Activated T-helper 1 cell treated with anti-CD3 and anti-CD28 coated beads, Interleukin-12 subunit alpha, Interleukin-12 subunit beta, Interleukin-2, Interleukin-4 antibody, amounts not matched to agents 30 ng/mL and 10 ng/mL and 1 ng/mL, durations not matched to agents 14 hours and 24 hours and 36 hours (primary cell): ENCODE measurements at regions of chr13 and their contacts with region 1.

Region 1: DNA sequence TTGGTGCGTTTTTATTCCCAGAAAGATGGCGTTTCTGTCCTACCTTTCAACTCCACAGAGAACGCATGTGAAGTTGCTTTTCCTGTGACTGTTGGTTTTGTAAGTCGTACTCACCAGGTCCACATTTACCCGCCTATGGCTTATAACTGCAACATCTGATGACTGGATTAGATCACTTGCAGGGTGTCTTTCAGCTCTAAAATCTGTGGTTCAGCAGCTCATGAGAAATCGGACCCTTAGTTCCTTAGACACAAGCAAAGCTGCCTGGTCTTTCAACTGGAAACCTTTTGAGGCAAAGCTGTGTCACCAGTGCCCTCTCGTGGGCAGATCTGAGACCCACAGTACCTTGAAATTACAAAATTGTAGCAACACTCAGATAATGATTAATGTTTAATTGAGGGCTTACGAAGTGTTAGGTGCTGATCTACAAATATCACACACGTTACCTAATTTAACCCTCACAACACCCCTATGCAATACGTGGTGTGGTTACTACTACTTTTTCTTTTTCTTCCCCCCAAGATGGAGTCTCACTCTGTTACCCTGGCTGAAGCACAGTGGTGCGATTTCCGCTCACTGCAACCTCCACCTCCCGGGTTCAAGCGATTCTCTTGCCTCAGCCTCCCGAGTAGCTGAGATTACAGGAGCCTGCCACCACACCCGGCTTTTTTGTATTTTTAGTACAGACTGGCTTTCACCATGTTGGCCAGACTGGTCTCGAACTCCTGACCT is 65.4 kb downstream of the RUBCNL start:
- DNase-seq: peak; percentile 52
- H3K4me3 Mint-ChIP-seq: peak overlapping the region; percentile 84
- H3K27ac Mint-ChIP-seq: peak overlapping the region; percentile 93
- H3K4me1 Mint-ChIP-seq: peaks cover 38% of the 10 kb centered on the region
- H3K27me3 Mint-ChIP-seq: peaks cover 2% of the 10 kb centered on the region

Region 2: GRCh38 chr13:45511310-45512097 is 810.2 kb before region 1 on chr13:
- intact Hi-C with region 1: loop called (anchors 1 kb)
- DNase-seq: no peak
- H3K4me3 Mint-ChIP-seq: no peak overlapping the region
- H3K27ac Mint-ChIP-seq: no peak overlapping the region
- H3K4me1 Mint-ChIP-seq: peaks cover 9% of the 10 kb centered on the region
- H3K27me3 Mint-ChIP-seq: no peaks in the 10 kb centered on the region

Region 3: DNA sequence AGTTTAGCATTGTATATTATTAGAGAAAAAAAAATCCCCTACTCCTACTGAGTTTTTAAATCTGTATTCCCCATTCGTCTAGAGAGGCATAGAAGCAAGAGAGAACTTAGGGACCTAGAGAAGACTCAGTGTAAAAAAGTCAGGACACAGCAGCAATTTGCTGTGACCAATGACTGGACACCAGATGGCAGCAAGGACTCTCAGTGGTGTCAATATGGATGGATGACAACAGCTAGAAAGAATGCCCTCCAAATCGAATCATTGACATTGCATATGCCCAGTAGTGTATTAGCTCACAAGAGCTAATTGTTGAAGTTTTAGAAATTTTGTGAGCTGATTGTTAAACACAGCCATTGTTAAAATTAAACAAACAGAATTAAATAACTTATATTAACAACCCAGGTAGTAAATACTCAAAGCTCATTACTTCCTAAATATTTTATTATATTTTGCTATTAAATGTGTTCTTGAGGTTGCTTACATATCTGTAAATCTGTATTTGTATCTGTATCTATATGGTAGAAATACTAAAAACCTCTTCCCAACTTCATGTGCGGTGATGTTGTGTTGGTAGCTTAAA is 514.0 kb before region 1 on chr13:
- intact Hi-C with region 1: loop called (anchors 1 kb)
- DNase-seq: no peak
- H3K4me3 Mint-ChIP-seq: no peak overlapping the region
- H3K27ac Mint-ChIP-seq: no peak overlapping the region
- H3K4me1 Mint-ChIP-seq: peaks cover 4% of the 10 kb centered on the region
- H3K27me3 Mint-ChIP-seq: peaks cover 2% of the 10 kb centered on the region

Region 4: GRCh38 chr13:46126552-46127357 is 194.9 kb before region 1 on chr13:
- intact Hi-C with region 1: loop called (anchors 1 kb)
- DNase-seq: peak; percentile 38
- H3K4me3 Mint-ChIP-seq: no peak overlapping the region
- H3K27ac Mint-ChIP-seq: peak overlapping the region; percentile 19
- H3K4me1 Mint-ChIP-seq: peaks cover 25% of the 10 kb centered on the region
- H3K27me3 Mint-ChIP-seq: peaks cover 2% of the 10 kb centered on the region

Region 5: GRCh38 chr13:46184277-46184699 is 137.4 kb before region 1 on chr13:
- intact Hi-C with region 1: loop called (anchors 1 kb)
- DNase-seq: peak; percentile 64
- H3K4me3 Mint-ChIP-seq: peak overlapping the region; percentile 97
- H3K27ac Mint-ChIP-seq: peak overlapping the region; percentile 99
- H3K4me1 Mint-ChIP-seq: peaks cover 39% of the 10 kb centered on the region
- H3K27me3 Mint-ChIP-seq: no peaks in the 10 kb centered on the region

Region 6: DNA sequence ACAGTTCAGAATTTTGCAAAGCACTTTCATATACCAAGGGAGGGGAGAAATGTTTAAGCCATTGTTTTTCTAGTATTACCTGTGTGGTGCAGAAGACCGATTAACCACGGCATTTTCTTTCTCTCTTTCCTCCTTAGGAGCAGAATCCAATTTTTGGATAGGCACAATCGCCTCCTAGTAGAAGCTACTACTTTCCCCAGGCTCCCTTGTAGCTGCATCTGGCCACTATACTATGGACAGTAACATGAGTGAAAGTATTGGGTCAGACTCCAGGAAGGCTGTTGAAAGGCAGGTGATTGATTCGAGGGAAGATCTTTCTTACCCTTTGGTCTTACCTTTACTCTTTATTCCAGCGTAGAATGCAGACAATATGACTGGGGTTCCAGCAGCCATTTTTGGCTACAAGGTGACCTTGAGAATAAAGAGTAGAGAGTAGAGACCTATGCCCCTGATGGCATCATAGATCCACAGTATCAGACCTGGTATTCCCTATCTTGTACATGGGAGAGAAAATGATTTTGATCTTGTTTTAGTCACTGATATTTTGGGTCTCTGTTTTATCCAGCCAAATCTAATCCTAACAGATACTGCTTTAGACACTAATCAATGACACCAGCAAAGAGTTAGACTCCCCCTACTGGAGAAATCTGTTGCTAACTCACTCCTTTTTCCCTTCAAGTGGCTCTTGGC is 32.9 kb before region 1 on chr13:
- intact Hi-C with region 1: loop called (anchors 1 kb)
- DNase-seq: no peak
- H3K4me3 Mint-ChIP-seq: no peak overlapping the region
- H3K27ac Mint-ChIP-seq: no peak overlapping the region
- H3K4me1 Mint-ChIP-seq: peaks cover 26% of the 10 kb centered on the region
- H3K27me3 Mint-ChIP-seq: peaks cover 5% of the 10 kb centered on the region

Region 7: DNA sequence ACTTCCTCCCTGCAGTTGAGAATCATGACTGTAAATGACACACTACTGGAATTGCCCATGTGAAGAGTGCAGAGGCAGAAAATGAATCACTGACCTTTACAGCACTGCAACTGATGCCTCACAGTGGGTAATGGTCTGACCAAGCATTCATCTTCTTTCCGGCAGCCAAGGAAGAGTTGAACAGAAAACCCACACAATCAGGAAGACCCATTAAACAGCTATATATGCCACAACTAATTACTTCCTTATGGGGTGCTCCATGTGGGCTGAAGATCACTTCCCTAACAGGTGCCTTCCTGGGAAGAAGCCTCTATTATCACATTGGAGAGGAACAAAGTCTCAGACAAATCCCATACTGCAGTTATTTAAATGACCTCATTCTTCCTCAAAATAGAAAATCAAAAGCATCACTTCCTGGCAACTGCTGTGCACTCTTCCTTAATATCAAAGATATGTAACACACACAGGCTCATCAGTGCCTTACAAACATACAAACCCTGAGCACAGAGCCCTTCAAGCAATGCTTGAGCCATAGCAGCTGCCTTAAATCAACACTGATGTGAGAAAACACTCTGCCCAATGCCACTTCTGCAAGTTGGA is 19.6 kb after region 1 on chr13:
- intact Hi-C with region 1: loop called (anchors 2 kb)
- DNase-seq: no peak
- H3K4me3 Mint-ChIP-seq: peak overlapping the region; percentile 60
- H3K27ac Mint-ChIP-seq: peak overlapping the region; percentile 97
- H3K4me1 Mint-ChIP-seq: peaks cover 48% of the 10 kb centered on the region
- H3K27me3 Mint-ChIP-seq: no peaks in the 10 kb centered on the region